Motor neuron (in vitro differentiated cells): ENCODE measurements at regions of chr12 and their contacts with region 1.

Region 1: GRCh38 chr12:51341259-51342007 is 5.0 kb downstream of the CELA1 start:
- ATAC-seq: peak; percentile 82 to 98 (median 96)
- H3K4me3 ChIP-seq: no peak overlapping the region
- H3K27ac ChIP-seq: no peak overlapping the region
- H3K4me1 ChIP-seq: peaks cover 2 to 4% of the 10 kb centered on the region in 2 donors

Region 2: GRCh38 chr12:50799908-50800307 is 541.5 kb before region 1 on chr12:
- in situ Hi-C with region 1: loop called in 2 of 9 experiments (anchors 25 kb)
- ATAC-seq: no peak
- H3K4me3 ChIP-seq: no peak overlapping the region
- H3K27ac ChIP-seq: no peak overlapping the region
- H3K4me1 ChIP-seq: no peaks in the 10 kb centered on the region

Region 3: DNA sequence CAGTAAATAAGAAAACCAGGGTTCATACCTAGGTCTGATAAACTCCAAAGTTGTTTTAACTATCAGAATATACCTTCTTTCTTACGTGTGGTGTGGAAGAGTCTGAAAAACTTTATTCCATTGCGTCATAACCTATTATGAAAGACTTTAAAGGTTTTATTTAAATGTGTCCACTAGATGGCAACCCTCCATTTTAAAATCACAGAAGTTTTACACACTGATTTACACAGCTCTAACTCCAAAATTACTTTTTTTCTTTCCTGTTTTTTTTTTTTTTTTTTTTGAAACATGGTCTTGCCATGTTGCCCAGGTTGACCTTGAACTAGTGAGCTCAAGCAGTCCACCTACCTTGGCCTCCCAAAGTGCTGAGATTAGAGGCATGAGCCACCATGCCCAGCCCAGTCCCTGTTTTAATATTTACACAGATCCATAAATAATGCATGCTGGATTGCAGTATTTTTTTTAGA is 516.0 kb before region 1 on chr12:
- in situ Hi-C with region 1: loop called in 4 of 9 experiments (anchors 25 kb)
- ATAC-seq: peak in 5 of 8 experiments; percentile 18 to 91 (median 82)
- H3K4me3 ChIP-seq: no peak overlapping the region
- H3K27ac ChIP-seq: no peak overlapping the region
- H3K4me1 ChIP-seq: no peaks in the 10 kb centered on the region

Region 4: DNA sequence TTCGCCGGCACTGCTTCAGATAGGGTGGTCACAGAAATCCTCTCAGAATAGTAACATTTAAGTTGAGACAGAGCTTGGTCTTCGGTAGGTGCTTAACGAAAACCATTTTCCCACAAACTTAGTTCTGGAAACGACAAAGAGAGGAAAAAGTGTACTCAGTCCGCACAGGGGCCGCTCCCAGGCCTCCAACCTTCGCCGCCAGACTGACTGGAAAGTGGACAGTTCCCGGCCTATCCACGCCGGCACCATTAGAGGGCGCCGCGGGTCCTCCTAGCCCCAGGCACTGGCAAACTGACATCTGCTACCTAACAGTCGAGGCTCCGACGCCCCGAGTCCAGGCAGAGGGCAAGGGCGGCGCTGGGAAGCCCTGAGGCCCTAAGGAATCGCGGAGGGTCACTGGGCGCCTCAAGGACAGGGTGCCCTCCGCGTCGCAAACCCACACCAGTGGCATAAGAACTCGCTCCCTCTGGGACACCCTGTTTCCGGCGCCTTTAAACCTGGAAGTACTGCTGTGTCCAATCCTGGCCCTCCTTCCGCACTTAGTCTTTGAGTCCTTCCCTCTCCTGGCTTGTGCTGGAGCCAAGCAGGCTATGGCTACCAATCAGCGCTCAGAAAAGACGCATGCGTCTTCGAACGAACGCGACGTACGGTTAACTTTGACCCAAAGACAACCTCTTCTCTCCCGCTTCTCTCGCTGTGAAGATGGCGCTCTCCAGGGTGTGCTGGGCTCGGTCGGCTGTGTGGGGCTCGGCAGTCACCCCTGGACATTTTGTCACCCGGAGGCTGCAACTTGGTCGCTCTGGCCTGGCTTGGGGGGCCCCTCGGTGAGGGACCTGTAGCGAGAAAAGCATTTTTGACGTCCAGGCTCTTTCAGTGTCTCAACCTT is 293.5 kb before region 1 on chr12 and contains the start of gene LETMD1:
- in situ Hi-C with region 1: loop called in 1 of 9 experiments (anchors 25 kb)
- ATAC-seq: peak; percentile 97 to 99 (median 98)
- H3K4me3 ChIP-seq: peak within 1 kb of the TSS; percentile 51 to 67 (median 63)
- H3K27ac ChIP-seq: peak within 1 kb of the TSS; percentile 80
- H3K4me1 ChIP-seq: peaks cover 13 to 16% of the 10 kb centered on the region in 2 donors
- total RNA-seq, gene LETMD1: 36.7 to 123 (median 75.9) TPM

Region 5: DNA sequence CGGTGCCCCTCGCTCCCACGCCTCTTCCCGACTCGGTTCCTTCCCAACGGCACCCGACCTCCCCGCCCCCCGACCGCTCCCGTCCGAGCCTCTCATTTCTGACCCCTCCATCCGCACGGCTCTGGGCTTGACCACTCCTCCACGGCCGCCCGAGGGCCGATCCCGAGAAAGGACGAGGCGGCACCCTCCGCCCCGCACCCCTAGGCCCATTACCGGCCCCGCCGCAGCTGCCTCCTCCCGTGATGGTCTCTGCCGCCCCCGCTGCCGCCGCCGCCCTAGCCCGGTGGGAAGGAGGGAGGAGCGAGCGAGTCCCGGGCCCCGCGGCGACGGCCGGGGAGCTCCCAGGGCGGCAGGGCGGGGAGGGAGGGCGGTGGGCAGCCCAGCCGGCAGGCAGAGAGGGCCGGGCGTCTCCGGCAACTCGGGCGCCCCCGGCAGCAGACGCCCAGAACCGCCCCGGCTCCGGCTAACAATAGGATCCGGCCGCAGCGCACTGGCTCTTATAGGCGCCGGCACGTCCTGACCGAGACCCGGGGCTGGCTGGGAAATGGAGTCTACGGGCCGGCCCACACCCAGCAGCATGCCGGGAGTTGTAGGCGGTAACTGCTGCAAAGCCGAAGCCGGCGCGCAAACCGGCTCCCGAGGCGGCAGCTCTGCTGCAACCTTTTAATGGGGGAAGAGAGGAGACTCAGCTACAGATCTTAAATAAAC is 258.2 kb before region 1 on chr12 and contains the start of gene CSRNP2:
- in situ Hi-C with region 1: loop called in 1 of 9 experiments (anchors 25 kb)
- ATAC-seq: peak; percentile 95 to 98 (median 98)
- H3K4me3 ChIP-seq: peak within 1 kb of the TSS; percentile 71 to 91 (median 86)
- H3K27ac ChIP-seq: peak within 1 kb of the TSS; percentile 79 to 84
- H3K4me1 ChIP-seq: peaks cover 3 to 10% of the 10 kb centered on the region in 2 donors
- total RNA-seq, gene CSRNP2: 18.5 to 50.3 (median 30.2) TPM

Region 6: GRCh38 chr12:51118706-51119105 is 222.7 kb before region 1 on chr12:
- in situ Hi-C with region 1: loop called in 1 of 9 experiments (anchors 25 kb)
- ATAC-seq: no peak
- H3K4me3 ChIP-seq: no peak overlapping the region
- H3K27ac ChIP-seq: no peak overlapping the region
- H3K4me1 ChIP-seq: no peaks in the 10 kb centered on the region

Region 7: GRCh38 chr12:51270067-51270970 is 71.1 kb before region 1 on chr12 and contains the start of gene SMAGP:
- in situ Hi-C with region 1: loop called in 1 of 9 experiments (anchors 10 kb)
- ATAC-seq: peak; percentile 42 to 86 (median 82)
- H3K4me3 ChIP-seq: peak within 1 kb of the TSS; percentile 41 to 54 (median 50)
- H3K27ac ChIP-seq: no peak within 1 kb of the TSS
- H3K4me1 ChIP-seq: peaks cover 7 to 11% of the 10 kb centered on the region in 2 donors
- total RNA-seq, gene SMAGP: 0.79 to 110 (median 2.9) TPM

Region 8: GRCh38 chr12:51482929-51483697 is 141.7 kb after region 1 on chr12:
- in situ Hi-C with region 1: no loop called
- ATAC-seq: peak in 1 of 8 experiments; percentile 38
- H3K4me3 ChIP-seq: no peak overlapping the region
- H3K27ac ChIP-seq: no peak overlapping the region
- H3K4me1 ChIP-seq: no peaks in the 10 kb centered on the region

Region 9: GRCh38 chr12:51726931-51727330 is 385.5 kb after region 1 on chr12:
- in situ Hi-C with region 1: no loop called
- ATAC-seq: no peak
- H3K4me3 ChIP-seq: no peak overlapping the region
- H3K27ac ChIP-seq: no peak overlapping the region
- H3K4me1 ChIP-seq: no peaks in the 10 kb centered on the region